ENCODE measurements at regions of chr6 and their contacts with region 1.

Region 1: DNA sequence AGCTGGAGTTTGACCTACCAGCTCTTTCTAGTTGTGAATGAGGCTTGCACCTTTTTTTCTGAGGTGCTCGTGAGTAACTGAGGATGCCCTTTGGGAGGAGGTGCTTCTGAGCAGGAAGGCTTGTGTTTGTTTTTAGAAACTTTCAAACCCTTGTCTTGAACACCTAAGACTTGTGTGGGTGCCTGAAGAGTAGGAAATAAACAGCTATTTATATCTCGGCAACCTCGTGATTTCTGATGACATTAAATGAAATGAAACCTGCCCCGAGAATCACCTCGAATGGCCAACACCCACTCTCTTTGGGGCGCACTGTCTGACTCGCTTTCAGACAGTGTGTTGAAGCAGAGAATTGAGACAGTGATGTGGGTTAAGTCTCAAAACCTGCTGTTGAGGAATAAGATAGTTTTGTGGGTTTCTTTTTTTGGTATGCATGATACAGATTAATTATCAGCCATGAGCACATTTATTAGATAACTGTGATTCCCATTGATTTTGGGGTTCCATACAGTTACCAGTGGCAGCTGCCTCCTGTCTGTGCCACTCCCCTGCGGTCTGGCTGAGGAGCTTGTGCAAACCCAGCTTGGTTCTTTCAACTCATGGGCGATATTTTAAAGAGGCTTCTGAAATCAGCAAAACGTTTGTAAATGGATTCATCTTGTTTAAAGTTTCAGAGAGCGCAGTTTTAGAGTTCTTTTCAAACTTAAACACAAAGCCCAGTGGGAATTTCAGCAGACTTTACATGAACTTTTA is 8.4 kb downstream of the IRF4 start:
- DNase-seq: peak; percentile 78
- ATAC-seq: peak; percentile 28
- H3K4me3 Mint-ChIP-seq: peak overlapping the region; percentile 68
- H3K27ac Mint-ChIP-seq: peak overlapping the region; percentile 88
- H3K4me1 Mint-ChIP-seq: peaks cover 91% of the 10 kb centered on the region
- H3K27me3 Mint-ChIP-seq: no peaks in the 10 kb centered on the region

Region 2: DNA sequence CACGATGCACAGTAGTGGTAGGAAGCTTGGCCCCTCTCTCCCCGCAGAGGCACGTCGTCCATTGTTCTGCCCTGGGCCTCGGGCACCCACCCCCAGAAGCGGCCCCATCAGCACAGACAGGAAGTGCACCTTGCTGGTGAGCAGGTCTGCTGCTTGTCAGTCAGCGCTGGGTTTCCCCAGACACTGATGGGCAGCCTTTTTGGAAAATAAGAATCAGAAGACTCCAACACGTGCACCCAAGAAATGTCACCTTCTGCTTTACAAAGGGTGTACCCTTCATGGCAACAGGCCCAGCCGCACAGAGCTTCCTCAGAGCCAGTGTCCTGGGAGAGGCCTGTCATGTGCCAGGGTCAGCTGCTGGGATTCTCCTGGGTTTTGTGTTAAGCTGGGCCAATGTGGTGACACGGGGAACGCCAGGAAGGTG is 43.1 kb before region 1 on chr6:
- CTCF ChIA-PET with region 1: no interaction called
- POLR2A ChIA-PET with region 1: no interaction called
- intact Hi-C with region 1: no loop called
- DNase-seq: peak; percentile 48
- ATAC-seq: peak; percentile 75
- H3K4me3 Mint-ChIP-seq: no peak overlapping the region
- H3K27ac Mint-ChIP-seq: peak overlapping the region; percentile 61
- H3K4me1 Mint-ChIP-seq: peaks cover 16% of the 10 kb centered on the region
- H3K27me3 Mint-ChIP-seq: no peaks in the 10 kb centered on the region

Region 3: GRCh38 chr6:373751-374724 is 25.9 kb before region 1 on chr6:
- CTCF ChIA-PET with region 1: no interaction called
- POLR2A ChIA-PET with region 1: no interaction called
- intact Hi-C with region 1: no loop called
- DNase-seq: no peak
- ATAC-seq: no peak
- H3K4me3 Mint-ChIP-seq: no peak overlapping the region
- H3K27ac Mint-ChIP-seq: no peak overlapping the region
- H3K4me1 Mint-ChIP-seq: peaks cover 7% of the 10 kb centered on the region
- H3K27me3 Mint-ChIP-seq: peaks cover 35% of the 10 kb centered on the region

Region 4: DNA sequence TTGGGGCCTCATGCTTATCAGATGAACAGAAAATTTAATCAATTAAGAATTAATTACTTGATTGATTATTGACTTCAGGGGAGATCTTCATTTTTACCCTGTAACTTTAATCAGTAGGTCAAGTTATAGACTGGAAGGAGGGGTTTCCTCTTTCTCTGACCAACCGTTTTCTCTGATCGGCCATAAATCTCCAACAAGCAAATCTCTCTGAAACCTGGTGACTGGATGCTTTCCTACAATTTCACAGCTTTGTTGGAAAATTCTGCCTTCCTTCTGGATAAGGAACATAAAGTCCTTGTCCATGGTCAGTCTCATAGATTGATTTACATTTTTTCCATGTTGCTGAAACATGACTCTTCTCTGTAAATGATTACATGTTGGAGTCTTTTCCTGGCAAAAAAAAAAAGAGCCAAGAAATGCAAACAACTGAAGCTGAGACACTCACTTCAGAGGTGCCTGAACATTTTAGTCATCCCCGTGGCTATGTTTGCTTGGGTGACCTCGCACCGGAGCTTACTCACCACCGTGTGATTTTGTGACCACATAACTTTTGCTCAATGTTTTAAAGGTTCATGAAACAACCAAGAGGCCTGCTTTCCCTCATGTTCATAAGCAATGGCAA is 22.6 kb after region 1 on chr6:
- CTCF ChIA-PET with region 1: interaction called, 5 read pairs
- POLR2A ChIA-PET with region 1: interaction called, 6 read pairs
- intact Hi-C with region 1: loop called (anchors 1 to 2 kb)
- DNase-seq: peak; percentile 87
- ATAC-seq: peak; percentile 99
- H3K4me3 Mint-ChIP-seq: no peak overlapping the region
- H3K27ac Mint-ChIP-seq: peak overlapping the region; percentile 63
- H3K4me1 Mint-ChIP-seq: peaks cover 31% of the 10 kb centered on the region
- H3K27me3 Mint-ChIP-seq: no peaks in the 10 kb centered on the region

Region 5: DNA sequence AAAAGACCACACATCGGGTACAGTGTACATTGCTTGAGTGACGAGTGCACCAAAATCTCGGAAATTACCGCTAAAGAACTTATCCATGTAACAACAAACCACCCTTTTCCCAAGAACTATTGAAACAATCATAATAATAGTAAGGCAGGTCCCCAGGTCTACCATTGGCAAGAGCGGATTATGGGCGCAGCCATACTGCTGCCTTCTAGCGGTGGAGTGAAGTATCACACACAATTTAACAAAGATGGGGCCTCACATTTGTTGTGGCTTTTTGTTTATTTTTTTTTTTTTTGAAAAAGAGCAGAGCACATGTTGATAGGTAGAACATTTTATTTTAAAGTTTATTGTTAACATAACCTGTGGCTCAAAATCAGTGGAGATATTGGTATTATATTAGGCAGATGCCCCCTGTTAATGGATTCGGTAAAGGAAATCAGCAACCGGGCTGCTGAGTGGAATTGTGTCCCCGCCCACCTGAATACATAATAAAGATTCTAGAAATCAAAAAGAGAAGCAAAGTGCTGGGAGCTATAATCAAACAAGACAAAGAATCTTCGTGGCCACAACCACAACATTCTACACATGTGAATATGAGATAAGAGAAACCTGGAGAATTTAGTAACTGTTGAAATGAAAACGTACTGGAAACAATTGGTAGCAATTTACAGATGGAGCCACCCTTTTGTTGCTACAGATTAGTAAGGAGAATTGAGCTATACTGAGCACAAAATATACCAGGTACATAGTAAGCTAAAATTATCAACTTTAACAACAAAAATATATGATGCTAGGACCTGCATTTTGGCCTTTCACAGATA is 387.2 kb after region 1 on chr6:
- CTCF ChIA-PET with region 1: no interaction called
- POLR2A ChIA-PET with region 1: no interaction called
- intact Hi-C with region 1: no loop called
- DNase-seq: peak; percentile 36
- ATAC-seq: peak; percentile 53
- H3K4me3 Mint-ChIP-seq: no peak overlapping the region
- H3K27ac Mint-ChIP-seq: peak overlapping the region; percentile 40
- H3K4me1 Mint-ChIP-seq: peaks cover 20% of the 10 kb centered on the region
- H3K27me3 Mint-ChIP-seq: peaks cover 12% of the 10 kb centered on the region

Region 6: GRCh38 chr6:1123386-1124375 is 723.7 kb after region 1 on chr6:
- CTCF ChIA-PET with region 1: no interaction called
- POLR2A ChIA-PET with region 1: no interaction called
- intact Hi-C with region 1: no loop called
- DNase-seq: no peak
- ATAC-seq: no peak
- H3K4me3 Mint-ChIP-seq: no peak overlapping the region
- H3K27ac Mint-ChIP-seq: no peak overlapping the region
- H3K4me1 Mint-ChIP-seq: no peaks in the 10 kb centered on the region
- H3K27me3 Mint-ChIP-seq: peaks cover 9% of the 10 kb centered on the region